PC-9 (cell line): ENCODE measurements at regions of chr6 and their contacts with region 1.

Region 1: DNA sequence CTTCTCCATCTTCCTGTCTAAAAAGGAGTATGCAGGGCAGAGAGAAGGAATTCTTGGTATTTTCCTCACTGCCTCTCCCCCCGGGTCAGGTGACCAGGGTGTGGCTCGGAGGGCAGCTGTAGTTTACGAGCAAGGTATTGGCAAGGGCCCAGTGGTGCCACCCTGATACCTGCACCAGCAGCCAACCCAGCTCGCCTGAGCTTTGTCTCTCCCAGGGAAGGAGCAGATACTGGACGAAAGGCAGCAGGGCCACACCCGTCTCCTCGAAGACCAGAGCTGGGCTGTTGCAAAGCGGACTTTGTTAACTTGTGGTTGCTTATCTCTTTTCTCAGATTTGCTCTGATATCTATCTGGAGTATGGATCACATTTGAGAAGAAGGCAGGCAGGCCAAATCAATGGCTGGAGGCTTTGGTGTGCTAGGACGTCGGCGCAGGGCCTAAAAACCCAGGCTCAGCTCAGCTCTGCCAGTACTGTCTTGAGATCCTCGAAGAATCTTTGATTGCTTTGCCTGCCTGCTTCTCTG is 25.4 kb downstream of the KCNK5 start:
- DNase-seq: peak; percentile 97 to 98
- H3K4me3 ChIP-seq: peak overlapping the region; percentile 16; the same call in 1 of the 2 replicates
- H3K27ac ChIP-seq: peak overlapping the region; percentile 95
- H3K4me1 ChIP-seq: peaks cover 96% of the 10 kb centered on the region
- H3K27me3 ChIP-seq: no peaks in the 10 kb centered on the region
- CTCF ChIP-seq: no peak

Region 2: GRCh38 chr6:39214846-39215639 is 11.1 kb after region 1 on chr6:
- CTCF ChIA-PET with region 1: interaction called, 3 read pairs
- POLR2A ChIA-PET with region 1: interaction called, 4 read pairs
- intact Hi-C with region 1: loop called (anchors 1 kb)
- DNase-seq: peak; percentile 80 to 85
- H3K4me3 ChIP-seq: no peak overlapping the region
- H3K27ac ChIP-seq: 0 out of 2 replicates have a peak overlapping the region, but pooled peaks have one; percentile 41
- H3K4me1 ChIP-seq: peaks cover 68% of the 10 kb centered on the region
- H3K27me3 ChIP-seq: no peaks in the 10 kb centered on the region
- CTCF ChIP-seq: no peak

Region 3: GRCh38 chr6:39280247-39280731 is 76.4 kb after region 1 on chr6:
- CTCF ChIA-PET with region 1: no interaction called
- POLR2A ChIA-PET with region 1: no interaction called
- intact Hi-C with region 1: loop called (anchors 1 kb)
- DNase-seq: peak; percentile 82 to 95
- H3K4me3 ChIP-seq: peak overlapping the region; percentile 9; the same call in 1 of the 2 replicates
- H3K27ac ChIP-seq: peak overlapping the region; percentile 94
- H3K4me1 ChIP-seq: peaks cover 43% of the 10 kb centered on the region
- H3K27me3 ChIP-seq: no peaks in the 10 kb centered on the region
- CTCF ChIP-seq: no peak

Region 4: DNA sequence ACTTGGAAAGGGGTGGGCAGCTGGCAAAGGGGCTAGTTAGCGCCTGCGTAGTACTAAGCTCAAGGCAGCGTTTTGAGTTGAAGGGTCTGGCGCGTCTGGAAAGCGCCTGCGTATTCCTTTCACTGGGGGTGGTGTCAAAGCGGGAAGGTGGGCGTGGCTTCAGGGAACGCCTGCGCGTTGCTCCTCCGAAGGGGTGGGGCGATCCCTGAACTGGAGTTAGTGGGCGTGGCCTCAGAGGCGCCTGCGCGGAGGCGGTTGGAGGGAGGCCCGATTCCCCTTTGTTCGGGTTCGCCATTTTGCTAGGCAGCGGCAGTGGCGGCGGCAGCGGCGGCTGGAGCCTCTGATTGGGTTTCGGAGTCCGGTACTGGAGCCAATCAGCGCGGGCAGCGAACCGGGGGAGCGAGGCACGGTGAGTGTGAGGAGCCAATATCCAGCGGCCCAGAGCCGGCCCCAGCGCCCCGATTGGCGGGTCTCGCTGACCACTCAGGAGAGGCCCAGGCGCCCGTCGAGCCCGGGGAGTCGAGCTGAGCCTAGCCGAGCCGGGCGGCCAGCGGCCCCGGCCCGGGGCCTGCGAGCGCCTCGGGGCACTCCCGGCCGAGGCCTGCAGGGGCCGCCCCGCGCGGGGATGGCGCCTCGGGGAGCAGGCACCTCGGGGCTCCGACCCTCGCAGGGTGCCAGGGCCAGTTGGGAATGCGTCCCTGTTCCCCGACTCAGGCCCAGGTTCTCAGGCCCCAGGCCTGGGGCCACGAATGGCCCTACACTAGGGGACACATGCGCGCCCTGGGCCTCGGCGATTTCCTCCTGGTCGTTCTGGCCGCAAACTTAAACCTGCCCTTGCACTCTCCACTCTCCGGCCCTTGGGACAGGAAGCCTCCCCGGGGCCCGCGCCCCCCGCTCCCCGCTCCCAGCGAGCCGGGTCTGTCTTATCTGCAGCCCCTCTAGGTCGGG is 1869.0 kb after region 1 on chr6 and contains the start of gene NFYA:
- CTCF ChIA-PET with region 1: no interaction called
- POLR2A ChIA-PET with region 1: no interaction called
- intact Hi-C with region 1: loop called (anchors 5 kb)
- DNase-seq: peak; percentile 95 to 99
- H3K4me3 ChIP-seq: peak within 1 kb of the TSS; percentile 82
- H3K27ac ChIP-seq: peak within 1 kb of the TSS; percentile 96
- H3K4me1 ChIP-seq: peaks cover 32% of the 10 kb centered on the region
- H3K27me3 ChIP-seq: no peaks in the 10 kb centered on the region
- CTCF ChIP-seq: no peak
- total RNA-seq, gene NFYA: 27.3 and 31.9 TPM in 2 replicates